ENCODE measurements at regions of chr3 and their contacts with region 1.

Region 1: DNA sequence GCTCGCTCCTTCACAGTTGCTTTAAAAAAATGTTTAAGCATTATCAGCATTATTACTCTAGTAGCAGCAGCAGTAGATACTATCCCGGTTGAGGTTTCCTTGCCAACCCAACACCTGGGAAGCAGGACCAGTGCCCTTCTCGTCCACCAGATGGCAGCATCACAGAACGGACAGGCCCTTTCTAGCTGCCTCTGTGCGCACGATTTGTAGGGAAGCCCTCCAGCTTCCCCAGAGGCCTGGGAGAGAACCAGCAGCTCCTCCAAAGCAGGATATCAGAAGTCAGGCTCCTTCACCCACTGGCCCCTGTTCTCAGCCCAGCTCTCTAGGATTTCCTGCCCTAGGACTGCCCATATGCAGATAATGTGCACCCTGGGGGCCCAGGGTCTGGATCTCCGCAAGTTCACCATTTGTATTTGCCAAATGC is 16.8 kb upstream of the ESYT3 start:
- DNase-seq: peak; percentile 66
- H3K4me3 Mint-ChIP-seq: no peak overlapping the region
- H3K27ac Mint-ChIP-seq: no peak overlapping the region
- H3K4me1 Mint-ChIP-seq: peaks cover 1% of the 10 kb centered on the region
- H3K27me3 Mint-ChIP-seq: peaks cover 20% of the 10 kb centered on the region

Region 2: DNA sequence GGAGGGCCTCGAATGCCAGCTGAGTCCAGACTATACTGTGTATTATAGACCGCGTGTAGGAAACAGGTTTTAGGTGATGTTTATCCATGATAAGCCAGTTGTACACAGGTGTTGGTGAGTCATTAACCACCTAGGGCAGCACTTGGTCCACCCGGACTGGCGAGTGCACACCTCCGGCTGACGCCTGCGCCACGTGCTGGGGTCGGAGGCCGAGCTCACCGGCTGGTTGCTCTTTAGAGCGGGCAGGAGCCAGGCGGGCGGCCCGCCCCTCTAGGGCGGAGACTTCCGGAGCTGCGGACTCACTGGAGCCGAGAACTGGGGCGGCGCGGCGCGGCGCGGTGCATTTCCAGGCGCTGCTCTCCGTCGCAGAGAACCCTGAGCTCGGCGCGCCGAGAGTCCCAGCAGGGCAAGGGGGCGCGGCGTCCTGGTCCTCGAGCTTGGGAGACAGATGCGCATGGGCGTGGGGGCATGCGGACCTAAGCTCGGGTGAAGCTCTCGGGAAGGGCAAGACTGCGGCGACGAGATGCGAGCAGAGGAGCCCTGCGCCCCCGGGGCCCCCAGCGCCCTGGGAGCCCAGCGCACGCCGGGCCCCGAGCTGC is 16.8 kb after region 1 on chr3 and contains the start of gene ESYT3:
- CTCF ChIA-PET with region 1: interaction called, 18 read pairs
- POLR2A ChIA-PET with region 1: interaction called, 3 read pairs
- DNase-seq: peak; percentile 72
- H3K4me3 Mint-ChIP-seq: peak within 1 kb of the TSS; percentile 72
- H3K27ac Mint-ChIP-seq: no peak within 1 kb of the TSS
- H3K4me1 Mint-ChIP-seq: peaks cover 15% of the 10 kb centered on the region
- H3K27me3 Mint-ChIP-seq: peaks cover 52% of the 10 kb centered on the region
- total RNA-seq, gene ESYT3: 0.43 to 0.50 TPM